PC-9 (cell line): ENCODE measurements at regions of chr7 and their contacts with region 1.

Region 1: GRCh38 chr7:78284945-78285344 is 486.4 kb downstream of the PHTF2 start:
- DNase-seq: no peak
- H3K4me3 ChIP-seq: no peak overlapping the region
- H3K27ac ChIP-seq: no peak overlapping the region
- H3K4me1 ChIP-seq: no peaks in the 10 kb centered on the region
- H3K27me3 ChIP-seq: no peaks in the 10 kb centered on the region
- CTCF ChIP-seq: no peak

Region 2: DNA sequence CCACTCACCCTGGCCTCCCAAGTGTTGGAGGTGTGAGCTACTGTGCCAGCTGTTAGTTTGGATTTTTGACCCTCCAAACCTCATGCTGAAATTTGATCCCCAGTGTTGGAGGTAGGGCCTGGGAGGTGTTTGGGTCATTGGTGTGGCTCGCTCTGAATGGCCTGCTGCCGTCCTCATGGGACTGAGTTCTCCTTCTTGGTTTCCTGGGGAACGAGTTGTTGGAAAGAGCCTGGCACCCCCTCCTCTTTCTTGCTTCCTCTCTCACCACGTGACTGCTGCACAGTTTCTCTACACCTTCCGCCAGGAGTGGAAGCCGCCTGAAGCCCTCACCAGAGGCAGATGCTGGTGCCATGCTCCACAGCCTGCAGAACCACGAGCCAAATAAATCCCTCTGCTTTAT is 232.8 kb before region 1 on chr7:
- CTCF ChIA-PET with region 1: no interaction called
- POLR2A ChIA-PET with region 1: no interaction called
- intact Hi-C with region 1: no loop called
- DNase-seq: no peak
- H3K4me3 ChIP-seq: no peak overlapping the region
- H3K27ac ChIP-seq: no peak overlapping the region
- H3K4me1 ChIP-seq: no peaks in the 10 kb centered on the region
- H3K27me3 ChIP-seq: no peaks in the 10 kb centered on the region
- CTCF ChIP-seq: no peak

Region 3: GRCh38 chr7:78326876-78327275 is 41.9 kb after region 1 on chr7:
- CTCF ChIA-PET with region 1: no interaction called
- POLR2A ChIA-PET with region 1: no interaction called
- intact Hi-C with region 1: loop called (anchors 5 kb)
- DNase-seq: peak in 1 of 2 experiments; percentile 70
- H3K4me3 ChIP-seq: no peak overlapping the region
- H3K27ac ChIP-seq: no peak overlapping the region
- H3K4me1 ChIP-seq: no peaks in the 10 kb centered on the region
- H3K27me3 ChIP-seq: no peaks in the 10 kb centered on the region
- CTCF ChIP-seq: no peak